Caco-2 (cell line): ENCODE measurements at regions of chr5 and their contacts with region 1.

Region 1: GRCh38 chr5:150129813-150130492 is 25.7 kb downstream of the PDGFRB start:
- DNase-seq: peak; percentile 80 to 86
- H3K4me3 ChIP-seq: no peak overlapping the region
- H3K4me3 Mint-ChIP-seq: no peak overlapping the region
- H3K27ac Mint-ChIP-seq: no peak overlapping the region
- H3K4me1 ChIP-seq: peaks cover 10% of the 10 kb centered on the region
- H3K4me1 Mint-ChIP-seq: peaks cover 9% of the 10 kb centered on the region
- H3K27me3 ChIP-seq: no peaks in the 10 kb centered on the region
- H3K27me3 Mint-ChIP-seq: no peaks in the 10 kb centered on the region
- CTCF ChIP-seq: peak; percentile 95 to 96

Region 2: GRCh38 chr5:150211156-150212030 is 81.4 kb after region 1 on chr5:
- CTCF ChIA-PET with region 1: interaction called, 3 read pairs
- POLR2A ChIA-PET with region 1: no interaction called
- intact Hi-C with region 1: loop called (anchors 1 kb)
- DNase-seq: peak; percentile 60 to 69
- H3K4me3 ChIP-seq: no peak overlapping the region
- H3K4me3 Mint-ChIP-seq: no peak overlapping the region
- H3K27ac Mint-ChIP-seq: peak overlapping the region; percentile 76
- H3K4me1 ChIP-seq: peaks cover 20% of the 10 kb centered on the region
- H3K4me1 Mint-ChIP-seq: peaks cover 29% of the 10 kb centered on the region
- H3K27me3 ChIP-seq: no peaks in the 10 kb centered on the region
- H3K27me3 Mint-ChIP-seq: no peaks in the 10 kb centered on the region
- CTCF ChIP-seq: peak in 1 of 2 experiments; percentile 35

Region 3: DNA sequence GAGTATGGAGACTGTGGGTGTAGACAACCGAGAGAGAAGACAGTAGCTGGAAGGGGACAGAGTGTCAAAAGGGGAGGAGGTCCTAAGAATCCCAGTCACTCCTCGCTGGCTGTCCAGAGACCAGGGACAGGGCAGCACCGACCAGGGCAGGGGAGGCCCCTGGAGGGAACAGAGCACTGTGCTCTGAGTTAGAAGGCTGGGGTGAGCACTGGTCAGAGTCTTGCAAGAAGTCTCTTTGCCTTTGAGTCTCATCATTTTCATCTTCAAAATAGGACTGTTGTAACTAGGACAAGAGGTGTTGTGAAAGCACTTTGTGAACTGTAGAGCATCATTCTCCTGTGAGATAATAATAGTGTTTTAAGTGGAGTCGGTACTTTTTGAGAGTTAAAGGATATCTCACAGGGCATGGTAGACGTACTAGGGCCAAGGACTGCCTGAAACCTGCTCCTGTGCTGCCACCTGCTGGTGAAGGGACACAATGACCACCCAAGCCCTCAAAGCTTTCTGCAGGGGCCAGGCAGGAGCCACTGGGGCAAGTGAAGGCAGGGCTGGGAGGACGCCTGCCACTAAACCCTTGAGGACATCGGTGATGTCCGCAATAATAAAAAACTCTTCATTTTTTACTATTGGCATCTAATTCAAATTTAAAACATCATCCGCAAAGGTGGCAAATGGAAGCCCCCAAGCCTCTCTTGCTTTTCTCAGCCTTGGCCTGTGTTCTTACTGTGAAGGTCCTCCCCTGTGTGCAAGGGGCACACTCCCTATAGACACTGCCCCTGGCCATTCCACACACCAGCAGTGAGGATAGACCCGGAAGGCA is 88.1 kb after region 1 on chr5:
- CTCF ChIA-PET with region 1: interaction called, 7 read pairs
- POLR2A ChIA-PET with region 1: no interaction called
- intact Hi-C with region 1: loop called (anchors 1 kb)
- DNase-seq: peak; percentile 83 to 89
- H3K4me3 ChIP-seq: no peak overlapping the region
- H3K4me3 Mint-ChIP-seq: no peak overlapping the region
- H3K27ac Mint-ChIP-seq: peak overlapping the region; percentile 54
- H3K4me1 ChIP-seq: peaks cover 19% of the 10 kb centered on the region
- H3K4me1 Mint-ChIP-seq: peaks cover 18% of the 10 kb centered on the region
- H3K27me3 ChIP-seq: no peaks in the 10 kb centered on the region
- H3K27me3 Mint-ChIP-seq: no peaks in the 10 kb centered on the region
- CTCF ChIP-seq: peak; percentile 83 to 93